ENCODE measurements at regions of chr1 and their contacts with region 1.

Region 1: DNA sequence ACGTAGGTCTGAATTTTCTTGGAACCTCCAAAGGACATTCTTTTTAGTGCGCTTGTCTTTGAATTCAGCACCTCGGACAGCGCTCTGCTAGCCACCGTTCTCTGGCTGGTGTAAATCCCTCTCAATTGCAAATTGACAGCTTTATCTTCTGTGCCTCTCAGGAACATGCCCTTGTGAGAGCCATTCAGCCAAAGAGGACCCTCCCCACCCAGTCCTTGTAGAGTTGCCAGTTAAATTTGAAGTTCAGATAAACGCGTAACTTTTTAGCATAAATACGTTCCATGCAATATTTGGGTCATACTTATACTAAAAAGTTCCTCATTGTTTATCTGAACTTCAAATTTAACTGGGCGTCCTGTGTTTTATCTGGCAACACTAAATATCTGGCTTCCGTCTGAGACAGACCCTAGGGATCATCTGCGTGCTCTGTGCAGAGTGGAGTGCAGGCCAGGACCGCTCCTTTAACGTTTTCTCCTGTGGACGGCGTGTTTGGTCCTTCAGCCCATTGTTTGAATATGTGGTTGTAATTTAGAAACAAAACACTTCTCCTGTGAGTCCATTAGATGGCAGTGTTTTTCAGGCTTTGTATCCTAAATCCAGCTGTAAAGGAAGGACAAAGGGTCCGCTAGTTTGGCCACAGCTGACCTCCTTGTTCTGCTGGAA is 7.0 kb downstream of the KCNAB2 start:
- DNase-seq: peak; percentile 70
- H3K4me3 ChIP-seq: no peak overlapping the region
- H3K27ac ChIP-seq: no peak overlapping the region
- H3K4me1 ChIP-seq: no peaks in the 10 kb centered on the region
- H3K27me3 ChIP-seq: no peaks in the 10 kb centered on the region
- CTCF ChIP-seq: peak; percentile 59 to 62
- POLR2A ChIP-seq: no peak

Region 2: GRCh38 chr1:5704561-5705514 is 347.8 kb before region 1 on chr1:
- CTCF ChIA-PET with region 1: no interaction called
- POLR2A ChIA-PET with region 1: no interaction called
- dilution Hi-C with region 1: no loop called
- intact Hi-C with region 1: no loop called
- DNase-seq: no peak
- H3K4me3 ChIP-seq: no peak overlapping the region
- H3K27ac ChIP-seq: no peak overlapping the region
- H3K4me1 ChIP-seq: no peaks in the 10 kb centered on the region
- H3K27me3 ChIP-seq: no peaks in the 10 kb centered on the region
- CTCF ChIP-seq: no peak
- POLR2A ChIP-seq: no peak

Region 3: DNA sequence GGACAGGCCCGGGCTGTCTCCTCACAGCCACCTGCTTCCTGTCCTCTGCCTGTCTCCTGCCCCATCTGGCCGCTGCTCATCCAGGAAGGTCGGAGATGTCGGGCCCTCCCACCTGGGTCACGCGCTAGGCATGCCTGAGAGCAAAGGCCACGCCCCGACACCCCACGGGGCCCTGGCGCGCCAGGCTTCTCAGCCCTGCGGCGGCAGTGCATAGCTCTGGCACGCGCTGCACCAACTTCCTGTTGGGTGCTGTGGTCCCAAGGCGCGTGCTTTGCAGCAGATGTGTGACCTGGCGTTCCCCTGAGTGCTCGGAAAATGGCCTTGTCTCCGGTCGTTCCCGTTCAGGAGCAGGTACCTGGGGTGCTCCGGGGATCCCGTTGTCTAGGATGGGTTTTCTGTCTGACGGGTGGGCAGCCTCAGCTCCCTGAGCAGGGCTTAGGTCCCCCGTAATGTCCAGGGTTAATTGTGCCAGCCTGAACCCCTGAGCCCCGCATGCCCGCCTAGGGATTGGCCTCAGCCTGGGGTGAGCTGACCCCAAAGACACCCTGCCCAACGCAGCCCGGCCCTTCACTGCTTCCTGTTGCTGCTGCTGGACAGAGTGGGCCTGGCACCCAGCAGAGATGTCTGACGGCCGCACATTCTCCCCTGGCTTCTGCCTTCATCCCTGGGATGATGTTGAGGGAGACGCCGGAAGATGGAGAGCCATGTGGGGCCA is 26.4 kb before region 1 on chr1:
- CTCF ChIA-PET with region 1: no interaction called
- POLR2A ChIA-PET with region 1: no interaction called
- dilution Hi-C with region 1: no loop called
- intact Hi-C with region 1: no loop called
- DNase-seq: no peak
- H3K4me3 ChIP-seq: no peak overlapping the region
- H3K27ac ChIP-seq: no peak overlapping the region
- H3K4me1 ChIP-seq: no peaks in the 10 kb centered on the region
- H3K27me3 ChIP-seq: no peaks in the 10 kb centered on the region
- CTCF ChIP-seq: no peak
- POLR2A ChIP-seq: no peak

Region 4: DNA sequence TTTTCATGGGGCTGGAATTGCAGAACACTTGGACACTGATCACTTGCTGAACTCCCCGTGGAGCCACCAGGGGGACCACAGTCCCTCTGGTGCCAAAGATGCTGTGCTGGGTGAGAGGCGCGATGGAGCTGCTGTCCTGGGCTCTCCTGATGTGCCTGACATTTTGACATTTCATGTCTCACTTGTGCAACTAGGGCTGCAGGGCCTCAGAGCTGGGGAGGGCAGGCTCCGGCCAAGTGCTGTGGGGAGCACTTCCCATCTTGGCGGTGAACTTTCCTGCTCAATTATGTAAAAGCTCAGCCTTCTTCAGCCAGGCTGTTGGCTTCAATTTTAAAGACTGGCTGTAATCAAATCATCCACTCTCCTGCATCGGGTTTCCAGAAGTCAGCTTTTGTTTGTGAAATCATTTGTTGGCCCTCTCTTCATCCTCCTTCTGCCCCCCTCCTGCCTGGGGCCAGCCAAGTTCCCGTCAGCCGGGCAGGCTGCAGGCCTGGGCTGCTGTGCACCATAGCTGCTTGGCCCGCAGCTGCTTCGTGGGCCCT is 29.8 kb after region 1 on chr1:
- CTCF ChIA-PET with region 1: interaction called, 41 read pairs
- POLR2A ChIA-PET with region 1: no interaction called
- dilution Hi-C with region 1: no loop called
- intact Hi-C with region 1: loop called (anchors 1 kb)
- DNase-seq: no peak
- H3K4me3 ChIP-seq: no peak overlapping the region
- H3K27ac ChIP-seq: no peak overlapping the region
- H3K4me1 ChIP-seq: no peaks in the 10 kb centered on the region
- H3K27me3 ChIP-seq: no peaks in the 10 kb centered on the region
- CTCF ChIP-seq: peak in 1 of 2 donors; percentile 57
- POLR2A ChIP-seq: no peak

Region 5: GRCh38 chr1:6157528-6158174 is 105.0 kb after region 1 on chr1:
- CTCF ChIA-PET with region 1: interaction called, 4 read pairs
- POLR2A ChIA-PET with region 1: no interaction called
- dilution Hi-C with region 1: no loop called
- intact Hi-C with region 1: loop called (anchors 1 kb)
- DNase-seq: no peak
- H3K4me3 ChIP-seq: no peak overlapping the region
- H3K27ac ChIP-seq: no peak overlapping the region
- H3K4me1 ChIP-seq: no peaks in the 10 kb centered on the region
- H3K27me3 ChIP-seq: no peaks in the 10 kb centered on the region
- CTCF ChIP-seq: no peak
- POLR2A ChIP-seq: no peak

Region 6: GRCh38 chr1:6185635-6186382 is 133.1 kb after region 1 on chr1:
- CTCF ChIA-PET with region 1: interaction called, 19 read pairs
- POLR2A ChIA-PET with region 1: no interaction called
- dilution Hi-C with region 1: no loop called
- intact Hi-C with region 1: loop called (anchors 1 kb)
- DNase-seq: peak; percentile 26
- H3K4me3 ChIP-seq: no peak overlapping the region
- H3K27ac ChIP-seq: no peak overlapping the region
- H3K4me1 ChIP-seq: no peaks in the 10 kb centered on the region
- H3K27me3 ChIP-seq: peaks cover 10 to 11% of the 10 kb centered on the region in 2 experiments
- CTCF ChIP-seq: peak; percentile 43 to 44
- POLR2A ChIP-seq: no peak

Region 7: DNA sequence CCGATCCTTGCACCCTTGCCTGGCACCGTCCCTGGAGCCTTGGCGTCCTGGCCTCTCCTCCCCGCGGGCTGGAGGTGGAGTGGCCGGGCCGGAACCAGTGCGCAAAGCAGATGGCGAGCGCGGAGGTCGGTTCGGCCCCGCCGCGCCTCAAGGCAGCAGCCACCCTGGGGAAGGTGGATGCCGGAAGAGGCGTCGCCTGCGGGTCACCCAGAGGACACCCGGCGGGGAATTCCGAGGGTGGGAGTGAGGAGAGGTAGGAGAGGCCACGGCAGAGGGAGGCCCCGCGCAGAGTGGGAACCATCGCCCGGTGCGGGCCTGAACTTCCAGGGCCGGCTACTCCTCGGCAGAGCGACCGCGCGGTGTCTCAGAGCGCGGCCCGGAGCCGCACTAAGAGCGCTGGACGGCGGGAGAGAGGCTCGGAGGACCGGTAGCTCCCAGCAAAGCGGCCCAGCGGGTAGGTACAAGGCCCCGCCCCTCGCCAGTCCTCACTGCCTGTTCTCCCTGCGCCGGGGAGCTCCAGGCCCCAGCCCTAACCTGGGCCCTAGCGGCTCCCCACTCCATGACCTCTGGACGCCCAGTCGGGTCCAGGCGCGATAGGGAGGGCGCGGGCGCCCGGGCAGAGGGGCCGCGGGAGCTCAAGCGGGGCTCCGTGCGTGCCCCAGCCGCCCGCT is 153.3 kb after region 1 on chr1 and contains the start of gene RNF207:
- CTCF ChIA-PET with region 1: interaction called, 20 read pairs
- POLR2A ChIA-PET with region 1: no interaction called
- dilution Hi-C with region 1: no loop called
- intact Hi-C with region 1: loop called (anchors 1 kb)
- DNase-seq: peak; percentile 18
- H3K4me3 ChIP-seq: peak within 1 kb of the TSS; percentile 23 to 59 (median 38)
- H3K27ac ChIP-seq: peak within 1 kb of the TSS; percentile 43
- H3K4me1 ChIP-seq: peaks cover 22% of the 10 kb centered on the region
- H3K27me3 ChIP-seq: peaks cover 6 to 11% of the 10 kb centered on the region in 2 experiments
- CTCF ChIP-seq: no peak
- POLR2A ChIP-seq: no peak
- total RNA-seq, gene RNF207: 2.4 and 8.2 TPM in 2 replicates

Measured in endothelial cell of umbilical vein (primary cell).